ENCODE measurements at regions of chr1 and their contacts with region 1.

Region 1: DNA sequence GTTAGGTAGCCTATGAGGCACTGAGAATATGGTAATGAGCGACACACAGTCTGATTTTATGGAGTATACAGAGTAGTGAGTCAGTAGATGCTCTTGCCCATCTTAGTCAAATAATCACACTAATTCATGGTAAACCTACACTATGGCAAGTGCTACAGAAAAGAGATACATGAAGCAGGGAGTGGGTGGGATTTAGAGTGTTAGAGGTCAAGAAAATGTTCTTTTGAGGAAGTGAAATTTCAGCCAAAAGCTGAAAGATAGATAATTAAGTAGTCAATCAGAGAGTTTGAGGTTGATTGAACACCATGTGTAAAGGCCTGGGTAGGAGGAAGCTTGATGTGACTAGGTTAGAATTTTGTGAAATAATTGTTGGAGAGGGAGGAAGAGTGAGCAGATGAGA is 14.7 kb downstream of the MDM4 start:
- DNase-seq: no peak
- ATAC-seq: no peak
- H3K4me3 Mint-ChIP-seq: no peak overlapping the region
- H3K27ac Mint-ChIP-seq: no peak overlapping the region
- H3K4me1 Mint-ChIP-seq: peaks cover 1% of the 10 kb centered on the region
- H3K27me3 Mint-ChIP-seq: no peaks in the 10 kb centered on the region

Region 2: DNA sequence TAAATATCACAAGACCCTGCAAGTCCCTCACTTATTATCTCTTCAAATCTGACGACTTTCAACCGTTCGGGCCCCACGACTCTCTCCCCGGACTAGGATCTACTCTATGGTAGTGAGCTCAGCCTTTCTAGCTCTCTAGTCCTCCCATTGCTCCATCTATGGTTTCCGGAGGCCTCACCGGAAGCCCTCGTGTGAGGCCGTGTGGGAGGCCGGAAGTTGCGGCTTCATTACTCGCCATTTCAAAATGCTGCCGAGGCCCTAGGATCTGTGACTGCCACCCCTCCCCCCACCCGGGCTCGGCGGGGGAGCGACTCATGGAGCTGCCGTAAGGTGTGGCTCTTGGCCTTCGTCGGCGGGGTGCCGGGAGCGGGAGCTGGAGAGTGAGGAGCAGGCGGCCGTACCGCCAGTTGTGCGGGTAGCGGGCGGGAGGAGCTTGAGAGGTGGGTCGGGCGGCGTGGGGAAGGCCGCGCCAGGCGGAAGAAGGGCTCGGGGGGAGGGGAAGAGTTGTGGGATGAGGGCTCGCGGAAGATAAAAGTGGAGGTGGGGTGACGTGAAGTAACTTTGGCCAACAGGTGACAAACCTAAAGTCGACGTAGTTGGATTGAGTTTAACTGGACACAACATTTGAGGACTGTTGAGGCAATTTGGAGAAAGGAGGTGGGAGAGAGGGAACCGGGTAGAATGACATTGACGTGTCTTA is 14.6 kb before region 1 on chr1 and contains the start of gene MDM4:
- CTCF ChIA-PET with region 1: interaction called, 10 read pairs
- POLR2A ChIA-PET with region 1: interaction called, 35 read pairs
- DNase-seq: peak; percentile 97
- ATAC-seq: peak; percentile 83
- H3K4me3 Mint-ChIP-seq: no peak within 1 kb of the TSS
- H3K27ac Mint-ChIP-seq: no peak within 1 kb of the TSS
- H3K4me1 Mint-ChIP-seq: peaks cover 65% of the 10 kb centered on the region
- H3K27me3 Mint-ChIP-seq: no peaks in the 10 kb centered on the region
- total RNA-seq, gene MDM4: 72.2 to 72.4 TPM

Region 3: GRCh38 chr1:204623894-204624361 is 93.0 kb after region 1 on chr1:
- CTCF ChIA-PET with region 1: no interaction called
- POLR2A ChIA-PET with region 1: no interaction called
- DNase-seq: peak; percentile 38
- ATAC-seq: peak; percentile 68
- H3K4me3 Mint-ChIP-seq: no peak overlapping the region
- H3K27ac Mint-ChIP-seq: no peak overlapping the region
- H3K4me1 Mint-ChIP-seq: no peaks in the 10 kb centered on the region
- H3K27me3 Mint-ChIP-seq: no peaks in the 10 kb centered on the region

Measured in activated CD8-positive, alpha-beta T cell treated with anti-CD3 and anti-CD28 coated beads, Interleukin-2, amount 10 ng/mL, durations not matched to agents 7 days and 5 days (primary cell).